Transverse colon (tissue), 4 donors: ENCODE measurements at regions of chr6 and their contacts with region 1.

Region 1: GRCh38 chr6:69796642-69797390 is at the start of gene LMBRD1:
- DNase-seq: peak; percentile 99
- H3K4me3 ChIP-seq: peak within 1 kb of the TSS; percentile 70 to 97 (median 88)
- H3K27ac ChIP-seq: peak within 1 kb of the TSS; percentile 93 to 99 (median 96)
- H3K4me1 ChIP-seq: peaks cover 0 to 33% (median 17%) of the 10 kb centered on the region in 4 donors
- H3K27me3 ChIP-seq: no peaks in the 10 kb centered on the region
- CTCF ChIP-seq: peak; percentile 81 to 98 (median 92)
- EP300 ChIP-seq: no peak
- POLR2A ChIP-seq: no peak
- total RNA-seq, gene LMBRD1: 35.5 to 89.8 (median 70.7) TPM

Region 2: DNA sequence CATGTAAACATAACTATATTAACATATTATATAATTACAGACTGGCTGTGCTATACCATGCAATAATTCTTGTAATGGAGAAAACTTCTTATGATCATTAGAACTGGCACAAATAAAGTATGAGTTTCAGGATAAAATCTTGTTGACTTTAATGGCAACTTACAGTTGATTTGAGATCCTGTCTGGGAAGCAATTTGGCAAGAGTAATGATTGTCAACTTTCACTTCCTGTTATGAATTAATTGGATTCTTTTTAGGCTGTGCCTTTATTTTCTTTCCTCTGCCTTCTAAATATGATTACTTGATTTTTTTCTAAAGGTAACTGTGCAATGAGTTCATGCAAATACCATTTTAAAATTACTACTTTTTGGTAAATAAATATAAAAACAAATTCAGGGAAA is 1318.2 kb after region 1 on chr6:
- in situ Hi-C with region 1: no loop called
- intact Hi-C with region 1: loop called (anchors 10 kb)
- DNase-seq: no peak
- H3K4me3 ChIP-seq: no peak overlapping the region
- H3K27ac ChIP-seq: no peak overlapping the region
- H3K4me1 ChIP-seq: no peaks in the 10 kb centered on the region
- H3K27me3 ChIP-seq: no peaks in the 10 kb centered on the region
- CTCF ChIP-seq: no peak
- EP300 ChIP-seq: no peak
- POLR2A ChIP-seq: no peak